ENCODE measurements at regions of chr17 and their contacts with region 1.

Region 1: DNA sequence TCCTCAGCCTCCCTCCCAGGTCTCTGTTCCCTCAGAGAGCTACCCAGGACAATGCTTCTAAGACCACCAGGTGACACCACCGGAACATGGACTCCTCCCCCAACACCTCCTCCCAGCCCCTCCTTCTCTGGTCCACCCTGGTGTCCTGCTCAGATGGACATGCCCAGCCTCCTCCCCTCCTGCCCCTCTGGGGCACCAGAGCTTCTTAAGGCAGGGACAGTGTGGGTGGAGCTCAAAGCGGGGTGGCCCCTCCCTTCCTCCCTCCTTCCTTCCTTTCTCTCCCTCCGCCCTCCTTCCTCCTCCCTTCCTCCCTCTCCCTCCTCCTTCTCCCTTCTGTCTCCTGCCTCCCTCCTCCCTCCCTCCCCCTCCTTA is 22.7 kb downstream of the TRPV3 start:
- DNase-seq: no peak
- ATAC-seq: no peak
- H3K4me3 ChIP-seq: no peak overlapping the region; a peak in 1 of 6 replicates
- H3K27ac ChIP-seq: no peak overlapping the region
- H3K4me1 ChIP-seq: peaks cover 38% of the 10 kb centered on the region
- H3K27me3 ChIP-seq: no peaks in the 10 kb centered on the region
- CTCF ChIP-seq: no peak
- EP300 ChIP-seq: no peak
- POLR2A ChIP-seq: no peak
- RAD21 ChIP-seq: no peak

Region 2: DNA sequence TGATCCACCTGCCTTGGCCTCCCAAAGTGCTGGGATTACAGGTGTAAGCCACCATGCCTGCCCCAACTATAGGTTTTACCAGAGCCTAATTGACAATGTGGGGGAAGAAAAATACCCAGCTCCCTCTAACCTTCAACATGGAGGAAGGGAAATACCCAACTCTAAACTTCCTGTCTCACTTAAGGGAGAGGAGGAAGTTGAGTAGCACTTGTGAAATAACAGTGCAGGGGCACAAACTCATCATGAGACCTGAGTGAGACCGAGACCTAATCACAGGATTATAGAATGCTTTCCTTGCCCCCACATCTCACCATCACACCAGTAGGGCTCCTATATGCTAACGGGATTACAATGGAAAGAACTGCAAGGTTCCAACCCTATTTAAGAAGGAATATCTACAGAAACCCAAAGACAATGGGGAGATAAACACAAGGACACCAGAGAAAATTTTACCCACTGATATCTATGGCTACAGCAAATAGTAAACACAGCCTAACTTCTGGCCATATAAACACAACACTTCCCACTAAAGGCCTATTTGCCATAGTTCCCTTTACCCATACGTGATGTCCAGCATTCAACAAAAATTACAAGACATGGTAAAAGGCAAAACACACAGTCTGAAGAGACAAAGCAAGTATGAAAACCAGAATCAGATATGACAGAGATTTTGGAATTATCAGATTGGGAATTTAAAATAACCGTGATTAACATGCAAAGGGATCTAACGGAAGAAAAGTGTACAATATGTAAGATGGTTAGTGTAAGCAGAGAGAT is 263.6 kb before region 1 on chr17:
- CTCF ChIA-PET with region 1: no interaction called
- POLR2A ChIA-PET with region 1: no interaction called
- in situ Hi-C with region 1: no loop called
- intact Hi-C with region 1: no loop called
- DNase-seq: no peak
- ATAC-seq: no peak
- H3K4me3 ChIP-seq: no peak overlapping the region
- H3K27ac ChIP-seq: no peak overlapping the region
- H3K4me1 ChIP-seq: no peaks in the 10 kb centered on the region
- H3K27me3 ChIP-seq: 0 out of 5 replicates have a peak, but pooled peaks cover 0 to 8% of the 10 kb centered on the region in 2 experiments
- CTCF ChIP-seq: no peak
- EP300 ChIP-seq: no peak
- POLR2A ChIP-seq: no peak
- RAD21 ChIP-seq: no peak

Region 3: GRCh38 chr17:3474212-3474611 is 60.7 kb before region 1 on chr17:
- CTCF ChIA-PET with region 1: no interaction called
- POLR2A ChIA-PET with region 1: no interaction called
- in situ Hi-C with region 1: no loop called
- intact Hi-C with region 1: loop called (anchors 5 kb)
- DNase-seq: peak; percentile 81
- ATAC-seq: peak; percentile 98
- H3K4me3 ChIP-seq: peak overlapping the region in 2 of 3 experiments; percentile 9 to 12; a peak in 1 of 6 replicates
- H3K27ac ChIP-seq: peak overlapping the region; percentile 90
- H3K4me1 ChIP-seq: peaks cover 44% of the 10 kb centered on the region
- H3K27me3 ChIP-seq: no peaks in the 10 kb centered on the region; a peak in 1 of 5 replicates
- CTCF ChIP-seq: no peak
- EP300 ChIP-seq: peak in 1 of 2 experiments; percentile 62; a peak in 1 of 4 replicates
- POLR2A ChIP-seq: no peak
- RAD21 ChIP-seq: no peak